ENCODE measurements at regions of chr3 and their contacts with region 1.

Region 1: DNA sequence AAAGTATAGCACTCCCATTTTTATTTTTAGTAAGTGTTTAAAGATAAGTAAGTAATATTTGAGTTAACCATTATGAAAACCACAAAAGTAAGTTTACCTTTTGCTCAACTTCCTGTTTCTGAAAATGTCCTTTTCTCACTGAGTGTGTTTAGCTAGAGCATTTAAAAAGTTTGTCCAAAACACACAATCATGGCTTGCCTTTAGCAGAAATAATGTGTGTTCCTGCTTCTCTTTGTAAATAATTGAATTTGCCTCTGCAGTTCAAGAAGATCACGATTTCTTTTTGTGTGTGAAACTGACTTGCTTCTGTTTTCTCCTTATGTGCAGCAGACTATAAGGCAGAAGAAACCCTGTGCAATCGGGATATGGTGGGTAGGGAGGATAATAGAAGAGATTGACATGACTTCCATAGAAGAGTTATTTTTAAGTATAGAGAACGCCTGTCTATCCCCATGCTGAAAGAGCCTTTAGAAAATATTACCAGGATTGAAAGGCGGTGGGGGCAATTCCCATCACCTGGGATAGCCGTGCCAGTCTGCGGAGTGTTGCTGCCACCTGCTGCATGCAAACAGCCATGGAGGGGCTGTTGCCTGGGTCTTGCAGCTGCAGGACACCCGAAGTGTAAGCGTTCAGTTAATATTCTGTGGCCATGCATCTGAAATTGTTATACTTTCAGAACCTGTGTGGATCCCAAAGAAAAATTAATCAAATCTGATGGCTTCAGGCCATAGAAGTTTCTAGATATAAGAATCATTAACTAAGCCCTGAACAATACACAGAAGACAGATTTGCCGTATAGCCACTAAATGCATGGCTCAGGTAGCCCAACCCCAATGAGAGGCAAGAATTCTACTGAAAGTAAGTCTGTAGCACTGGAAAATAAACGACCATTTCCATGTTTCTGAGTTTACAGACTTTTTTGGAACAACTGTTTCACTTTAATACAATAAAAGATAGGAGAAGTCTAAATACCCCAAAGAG is 2.4 kb upstream of the CD96 start:
- DNase-seq: peak; percentile 36
- H3K4me3 Mint-ChIP-seq: peak overlapping the region; percentile 77
- H3K27ac Mint-ChIP-seq: peak overlapping the region; percentile 80
- H3K4me1 Mint-ChIP-seq: peaks cover 75% of the 10 kb centered on the region
- H3K27me3 Mint-ChIP-seq: no peaks in the 10 kb centered on the region

Region 2: GRCh38 chr3:109731620-109732473 is 1807.8 kb before region 1 on chr3:
- intact Hi-C with region 1: loop called (anchors 1 kb)
- DNase-seq: peak; percentile 7
- H3K4me3 Mint-ChIP-seq: no peak overlapping the region
- H3K27ac Mint-ChIP-seq: no peak overlapping the region
- H3K4me1 Mint-ChIP-seq: no peaks in the 10 kb centered on the region
- H3K27me3 Mint-ChIP-seq: peaks cover 6% of the 10 kb centered on the region

Region 3: DNA sequence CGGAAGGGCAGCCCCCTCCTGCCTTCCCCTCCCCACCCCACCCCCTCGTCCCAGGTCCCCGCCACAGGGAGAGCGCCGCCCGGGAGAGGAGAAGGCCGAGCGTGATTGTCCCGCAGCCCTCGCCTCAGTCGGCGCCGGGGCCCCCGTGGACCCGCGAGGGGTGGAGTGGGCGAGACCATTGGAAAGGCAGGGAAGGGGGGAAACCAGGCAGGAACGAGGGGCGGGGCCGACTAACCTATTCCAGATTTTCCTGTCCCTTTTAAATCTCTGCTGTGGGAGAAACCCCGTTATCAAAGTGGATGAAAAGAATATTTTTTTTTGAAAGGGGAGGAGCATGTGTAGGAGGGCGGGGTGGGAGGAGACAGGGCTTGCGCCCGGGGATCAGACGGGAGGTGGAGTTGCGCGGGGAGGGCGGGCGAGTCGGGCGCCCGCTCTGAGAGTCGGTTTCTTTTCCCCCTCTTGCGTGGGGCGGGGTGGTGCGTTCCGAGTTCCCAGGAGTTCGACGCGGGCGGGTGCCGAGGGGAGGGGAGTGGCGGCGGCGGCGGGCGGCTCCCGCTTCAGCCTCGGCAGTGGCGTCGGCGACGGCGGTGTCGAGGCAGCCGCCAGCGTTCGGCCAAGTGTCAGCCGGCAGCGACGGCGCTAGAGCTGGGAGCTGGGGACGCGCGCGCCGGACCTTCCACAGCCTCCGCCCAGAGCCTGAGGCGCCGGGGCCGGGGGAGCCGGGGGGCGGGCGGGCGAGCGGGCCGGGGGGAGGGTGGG is 468.2 kb before region 1 on chr3 and contains the start of gene NECTIN3:
- intact Hi-C with region 1: loop called (anchors 1 kb)
- DNase-seq: peak; percentile 77
- H3K4me3 Mint-ChIP-seq: peak within 1 kb of the TSS; percentile 91
- H3K27ac Mint-ChIP-seq: peak within 1 kb of the TSS; percentile 90
- H3K4me1 Mint-ChIP-seq: peaks cover 28% of the 10 kb centered on the region
- H3K27me3 Mint-ChIP-seq: peaks cover 55% of the 10 kb centered on the region
- total RNA-seq, gene NECTIN3: 3.5 and 4.6 TPM in 2 replicates

Region 4: GRCh38 chr3:111311709-111312235 is 227.9 kb before region 1 on chr3:
- intact Hi-C with region 1: loop called (anchors 5 kb)
- DNase-seq: no peak
- H3K4me3 Mint-ChIP-seq: peak overlapping the region; percentile 45
- H3K27ac Mint-ChIP-seq: peak overlapping the region; percentile 92
- H3K4me1 Mint-ChIP-seq: no peaks in the 10 kb centered on the region
- H3K27me3 Mint-ChIP-seq: no peaks in the 10 kb centered on the region

Region 5: GRCh38 chr3:111373861-111374260 is 165.8 kb before region 1 on chr3:
- intact Hi-C with region 1: no loop called
- DNase-seq: no peak
- H3K4me3 Mint-ChIP-seq: no peak overlapping the region
- H3K27ac Mint-ChIP-seq: no peak overlapping the region
- H3K4me1 Mint-ChIP-seq: no peaks in the 10 kb centered on the region
- H3K27me3 Mint-ChIP-seq: peaks cover 7% of the 10 kb centered on the region

Region 6: GRCh38 chr3:111392901-111393351 is 146.7 kb before region 1 on chr3:
- intact Hi-C with region 1: loop called (anchors 5 kb)
- DNase-seq: peak; percentile 16
- H3K4me3 Mint-ChIP-seq: no peak overlapping the region
- H3K27ac Mint-ChIP-seq: no peak overlapping the region
- H3K4me1 Mint-ChIP-seq: peaks cover 14% of the 10 kb centered on the region
- H3K27me3 Mint-ChIP-seq: no peaks in the 10 kb centered on the region

Region 7: GRCh38 chr3:111610189-111610588 is 70.5 kb after region 1 on chr3:
- intact Hi-C with region 1: loop called (anchors 1 kb)
- DNase-seq: peak; percentile 61
- H3K4me3 Mint-ChIP-seq: peak overlapping the region; percentile 69
- H3K27ac Mint-ChIP-seq: peak overlapping the region; percentile 98
- H3K4me1 Mint-ChIP-seq: peaks cover 98% of the 10 kb centered on the region
- H3K27me3 Mint-ChIP-seq: no peaks in the 10 kb centered on the region

Measured in activated T-helper 1 cell treated with anti-CD3 and anti-CD28 coated beads, Interleukin-12 subunit alpha, Interleukin-12 subunit beta, Interleukin-2, Interleukin-4 antibody, amounts not matched to agents 30 ng/mL and 10 ng/mL and 1 ng/mL, durations not matched to agents 14 hours and 24 hours and 36 hours (primary cell).